Calu3 (cell line): ENCODE measurements at regions of chr21 and their contacts with region 1.

Region 1: GRCh38 chr21:29506947-29507346 is 208.2 kb downstream of the BACH1 start:
- DNase-seq: no peak
- H3K4me3 Mint-ChIP-seq: no peak overlapping the region
- H3K27ac Mint-ChIP-seq: no peak overlapping the region
- H3K4me1 Mint-ChIP-seq: no peaks in the 10 kb centered on the region
- H3K27me3 Mint-ChIP-seq: no peaks in the 10 kb centered on the region
- CTCF ChIP-seq: no peak

Region 2: GRCh38 chr21:29534448-29534847 is 27.5 kb after region 1 on chr21:
- CTCF ChIA-PET with region 1: no interaction called
- intact Hi-C with region 1: loop called (anchors 2 kb)
- DNase-seq: no peak
- H3K4me3 Mint-ChIP-seq: peak overlapping the region; percentile 34
- H3K27ac Mint-ChIP-seq: peak overlapping the region; percentile 55
- H3K4me1 Mint-ChIP-seq: peaks cover 37% of the 10 kb centered on the region
- H3K27me3 Mint-ChIP-seq: no peaks in the 10 kb centered on the region
- CTCF ChIP-seq: no peak